Breast epithelium (tissue), 4 donors: ENCODE measurements at regions of chr13 and their contacts with region 1.

Region 1: GRCh38 chr13:34401696-34402095 is 540.4 kb upstream of the NBEA start:
- DNase-seq: no peak
- H3K4me3 ChIP-seq: no peak overlapping the region
- H3K27ac ChIP-seq: no peak overlapping the region
- H3K4me1 ChIP-seq: no peaks in the 10 kb centered on the region
- H3K27me3 ChIP-seq: no peaks in the 10 kb centered on the region
- CTCF ChIP-seq: no peak
- POLR2A ChIP-seq: no peak

Region 2: DNA sequence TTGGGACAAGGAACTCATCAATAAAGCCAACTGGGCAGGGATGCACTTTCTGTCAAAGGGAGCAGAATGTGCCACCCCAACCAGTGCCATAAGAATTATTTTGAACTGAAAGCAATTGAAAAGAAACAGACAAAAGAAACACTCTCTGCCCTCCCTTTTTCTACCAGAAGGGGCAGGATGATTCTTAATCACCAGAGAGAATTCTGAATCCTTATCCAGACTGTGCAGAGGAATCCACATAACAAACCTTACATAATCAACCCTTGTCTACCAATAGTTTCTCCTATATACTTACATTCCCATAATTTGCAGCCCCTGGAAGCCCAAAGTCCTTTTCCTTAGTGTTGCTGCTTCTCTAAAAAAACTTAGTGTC is 19.6 kb after region 1 on chr13:
- intact Hi-C with region 1: no loop called
- DNase-seq: no peak
- H3K4me3 ChIP-seq: no peak overlapping the region
- H3K27ac ChIP-seq: peak overlapping the region in 1 of 2 donors; percentile 44
- H3K4me1 ChIP-seq: peaks cover 0 to 7% of the 10 kb centered on the region in 2 donors
- H3K27me3 ChIP-seq: no peaks in the 10 kb centered on the region
- CTCF ChIP-seq: no peak
- POLR2A ChIP-seq: no peak

Region 3: GRCh38 chr13:34474187-34474868 is 72.6 kb after region 1 on chr13:
- intact Hi-C with region 1: no loop called
- DNase-seq: no peak
- H3K4me3 ChIP-seq: no peak overlapping the region
- H3K27ac ChIP-seq: no peak overlapping the region
- H3K4me1 ChIP-seq: no peaks in the 10 kb centered on the region
- H3K27me3 ChIP-seq: no peaks in the 10 kb centered on the region
- CTCF ChIP-seq: no peak
- POLR2A ChIP-seq: no peak

Region 4: DNA sequence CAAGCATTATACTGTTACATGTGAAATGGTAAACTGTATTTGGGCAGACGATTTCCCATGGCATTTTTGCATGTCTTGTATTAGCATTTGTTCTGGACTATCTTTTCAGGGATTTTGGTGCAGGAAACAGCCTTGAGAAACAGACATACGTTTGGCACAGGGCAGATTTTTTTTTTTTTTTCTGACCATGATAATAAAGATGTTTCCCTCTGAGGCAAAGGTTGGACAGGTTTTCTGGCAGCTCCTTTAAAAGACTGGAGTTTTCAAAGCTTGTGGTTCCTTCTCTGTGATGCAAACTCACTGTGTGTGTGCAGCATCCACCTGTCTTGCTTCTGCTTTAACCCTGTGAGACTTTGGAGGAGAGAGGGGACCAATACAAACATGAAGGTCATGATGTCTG is 603.4 kb after region 1 on chr13:
- intact Hi-C with region 1: loop called (anchors 5 kb)
- DNase-seq: no peak
- H3K4me3 ChIP-seq: no peak overlapping the region
- H3K27ac ChIP-seq: no peak overlapping the region
- H3K4me1 ChIP-seq: no peaks in the 10 kb centered on the region
- H3K27me3 ChIP-seq: no peaks in the 10 kb centered on the region
- CTCF ChIP-seq: no peak
- POLR2A ChIP-seq: no peak